Heart right ventricle (tissue), 16 donors: ENCODE measurements at regions of chr19 and their contacts with region 1.

Region 1: GRCh38 chr19:43983912-43984686 is at the start of gene ZNF155:
- DNase-seq: peak; percentile 88 to 97
- ATAC-seq: peak; percentile 98 to 100 (median 100)
- H3K4me3 ChIP-seq: peak within 1 kb of the TSS; percentile 51 to 80 (median 70)
- H3K27ac ChIP-seq: peak within 1 kb of the TSS in 9 of 10 donors; percentile 69 to 83 (median 81)
- H3K4me1 ChIP-seq: peaks cover 0 to 20% (median 12%) of the 10 kb centered on the region in 9 donors
- H3K27me3 ChIP-seq: no peaks in the 10 kb centered on the region
- CTCF ChIP-seq: no peak
- total RNA-seq, gene ZNF155: 1.5 to 7.8 (median 6.9) TPM

Region 2: DNA sequence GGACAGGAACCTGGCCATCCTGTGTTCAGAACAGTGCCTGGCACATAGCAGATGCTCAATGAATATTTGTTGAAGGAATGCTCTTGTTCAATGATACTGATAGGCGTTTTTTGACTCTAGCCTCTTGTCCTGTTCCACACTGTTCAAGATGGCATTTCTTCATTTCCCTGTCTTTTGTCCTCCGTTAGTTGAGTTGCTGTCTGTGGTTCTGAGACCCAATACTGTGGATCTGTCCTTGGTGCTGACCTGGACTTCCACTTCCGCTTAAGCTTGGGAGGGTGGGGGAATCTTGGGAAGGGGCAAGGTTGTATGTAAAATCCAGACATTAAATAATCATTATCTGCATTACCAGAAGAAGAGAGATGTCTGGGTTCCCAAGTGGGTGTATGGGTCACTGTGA is 195.1 kb before region 1 on chr19:
- intact Hi-C with region 1: no loop called
- DNase-seq: no peak
- ATAC-seq: no peak
- H3K4me3 ChIP-seq: no peak overlapping the region
- H3K27ac ChIP-seq: no peak overlapping the region
- H3K4me1 ChIP-seq: peaks cover 0 to 15% (median 2%) of the 10 kb centered on the region in 9 donors
- H3K27me3 ChIP-seq: peaks cover 0 to 21% (median 15%) of the 10 kb centered on the region in 7 donors
- CTCF ChIP-seq: no peak

Region 3: DNA sequence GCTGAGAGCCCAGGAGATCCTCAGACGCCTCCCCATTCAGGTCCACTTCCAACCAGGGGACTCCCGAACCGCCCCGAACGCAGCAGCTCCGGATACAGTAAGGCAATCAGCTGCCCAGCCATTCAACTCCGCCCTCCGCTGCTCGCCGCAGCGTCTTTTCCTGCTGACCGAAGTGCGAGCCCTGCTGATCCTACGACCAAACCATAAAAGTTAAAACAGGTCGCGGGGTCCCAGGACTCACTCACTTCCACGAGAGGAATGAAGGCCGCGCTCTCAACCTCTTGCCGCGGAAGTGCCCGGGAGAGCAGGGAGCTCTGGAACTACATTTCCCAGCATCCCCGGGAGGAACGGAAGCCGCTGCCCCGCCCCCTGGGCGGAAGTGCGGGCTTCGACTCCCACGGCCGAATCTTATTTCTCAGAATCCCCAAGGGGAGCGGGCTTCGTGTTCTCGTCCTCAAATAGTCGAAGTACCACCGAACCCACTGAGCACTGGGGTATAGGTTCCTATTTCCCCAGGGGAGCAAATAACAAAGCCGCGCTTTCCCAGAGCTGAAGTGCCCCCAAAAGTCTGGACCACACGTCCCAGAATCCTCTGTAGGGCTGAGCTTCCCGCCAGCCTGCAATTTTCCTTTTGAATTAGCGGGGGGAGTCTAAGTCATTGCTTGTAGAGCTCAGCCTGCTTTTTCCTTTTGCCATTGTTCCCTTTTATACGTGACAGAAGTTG is 49.0 kb before region 1 on chr19 and contains the start of gene ZNF45:
- intact Hi-C with region 1: loop called in 1 of 10 experiments (anchors 2 kb)
- DNase-seq: peak; percentile 85 to 94
- ATAC-seq: peak; percentile 97 to 99 (median 99)
- H3K4me3 ChIP-seq: peak within 1 kb of the TSS; percentile 43 to 76 (median 66)
- H3K27ac ChIP-seq: peak within 1 kb of the TSS; percentile 39 to 92 (median 86)
- H3K4me1 ChIP-seq: peaks cover 0 to 24% (median 18%) of the 10 kb centered on the region in 9 donors
- H3K27me3 ChIP-seq: no peaks in the 10 kb centered on the region
- CTCF ChIP-seq: no peak
- total RNA-seq, gene ZNF45: 7.0 to 10.7 (median 8.0) TPM

Region 4: GRCh38 chr19:43950834-43951645 is 33.1 kb before region 1 on chr19 and contains the start of gene ZNF221:
- intact Hi-C with region 1: loop called in 1 of 10 experiments (anchors 1 kb)
- DNase-seq: peak; percentile 85 to 95
- ATAC-seq: peak; percentile 98 to 100 (median 100)
- H3K4me3 ChIP-seq: peak within 1 kb of the TSS; percentile 44 to 94 (median 78)
- H3K27ac ChIP-seq: peak within 1 kb of the TSS in 9 of 10 donors; percentile 54 to 84 (median 79)
- H3K4me1 ChIP-seq: peaks cover 0 to 4% (median 0%) of the 10 kb centered on the region in 9 donors
- H3K27me3 ChIP-seq: no peaks in the 10 kb centered on the region
- CTCF ChIP-seq: peak in 8 of 9 donors; percentile 39 to 80 (median 53)
- total RNA-seq, gene ZNF221: 3.0 to 6.7 (median 5.0) TPM

Region 5: GRCh38 chr19:44051654-44052402 is 67.7 kb after region 1 on chr19 and contains the start of gene ZNF223:
- intact Hi-C with region 1: loop called in 2 of 10 experiments (anchors 5 kb)
- DNase-seq: peak; percentile 92 to 97
- ATAC-seq: peak; percentile 100
- H3K4me3 ChIP-seq: peak within 1 kb of the TSS; percentile 52 to 81 (median 71)
- H3K27ac ChIP-seq: peak within 1 kb of the TSS in 9 of 10 donors; percentile 49 to 82 (median 64)
- H3K4me1 ChIP-seq: peaks cover 3 to 21% (median 12%) of the 10 kb centered on the region in 9 donors
- H3K27me3 ChIP-seq: peaks cover 0 to 37% (median 18%) of the 10 kb centered on the region in 7 donors
- CTCF ChIP-seq: no peak
- total RNA-seq, gene ZNF223: 2.3 to 5.4 (median 3.2) TPM